ENCODE measurements at regions of chr1 and their contacts with region 1.

Region 1: DNA sequence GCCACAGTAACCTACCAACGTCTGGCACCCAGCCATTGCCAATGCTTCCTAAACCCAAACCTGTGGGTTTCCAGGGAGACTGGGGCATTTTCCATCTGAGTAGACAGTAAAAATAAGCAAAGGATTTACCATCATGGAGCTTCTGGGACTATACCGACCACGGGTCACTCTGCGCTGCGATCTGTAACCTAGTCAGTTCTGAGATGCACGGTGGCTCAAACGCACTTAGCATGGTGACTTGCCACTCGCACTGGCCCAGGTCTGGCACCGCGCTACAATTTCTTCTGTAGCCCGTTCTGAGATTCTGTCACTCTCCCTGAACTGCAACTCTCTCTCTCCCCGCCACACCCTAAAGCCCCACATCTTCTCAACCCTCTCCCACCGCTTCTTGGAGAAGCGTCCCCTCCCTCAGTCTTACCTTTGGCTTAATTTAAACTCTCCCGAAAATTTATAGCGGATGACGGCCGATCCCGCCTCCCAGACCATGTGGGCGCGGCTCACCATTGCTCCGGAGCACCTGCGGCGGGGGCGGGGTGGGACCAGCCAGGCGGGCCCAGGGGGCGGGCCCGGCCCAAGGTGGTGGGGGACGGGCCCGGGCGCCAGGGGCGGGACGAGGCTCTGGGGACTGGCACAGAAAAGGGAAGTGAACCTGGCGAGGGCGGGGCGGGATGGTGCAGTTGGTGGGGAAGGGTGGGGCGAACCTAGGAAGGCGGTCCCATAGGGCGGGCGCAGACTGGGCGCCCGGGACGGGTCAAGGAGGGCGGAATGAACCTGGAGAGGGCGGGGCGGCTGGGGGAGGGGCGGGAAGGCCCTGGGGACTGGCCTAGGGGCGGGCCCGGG is 493 bp upstream of the MAP3K21 start:
- DNase-seq: peak; percentile 70
- H3K4me3 Mint-ChIP-seq: peak overlapping the region; percentile 81
- H3K27ac Mint-ChIP-seq: peak overlapping the region; percentile 47
- H3K4me1 Mint-ChIP-seq: peaks cover 11% of the 10 kb centered on the region
- H3K27me3 Mint-ChIP-seq: peaks cover 35% of the 10 kb centered on the region

Region 2: GRCh38 chr1:233097959-233098580 is 229.0 kb before region 1 on chr1:
- intact Hi-C with region 1: no loop called
- DNase-seq: no peak
- H3K4me3 Mint-ChIP-seq: no peak overlapping the region
- H3K27ac Mint-ChIP-seq: no peak overlapping the region
- H3K4me1 Mint-ChIP-seq: peaks cover 10% of the 10 kb centered on the region
- H3K27me3 Mint-ChIP-seq: no peaks in the 10 kb centered on the region

Region 3: DNA sequence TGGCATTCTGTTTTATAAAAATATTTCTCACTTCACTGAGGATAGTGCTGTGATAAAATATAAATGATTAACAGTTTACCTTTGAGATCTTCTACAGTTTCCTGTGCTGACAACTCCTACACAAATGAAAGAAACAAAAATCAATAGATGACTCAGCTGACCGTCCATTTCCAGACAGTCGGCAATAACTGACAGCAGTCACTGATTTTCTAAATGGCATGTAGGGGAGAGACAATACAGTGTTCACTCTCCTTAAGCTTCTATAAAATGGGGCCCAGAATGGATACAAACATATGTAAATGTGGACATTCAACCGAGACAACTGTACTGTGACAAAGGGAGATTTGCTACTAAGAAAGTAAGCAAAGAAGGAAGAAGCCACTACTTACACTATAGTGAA is 65.8 kb before region 1 on chr1:
- intact Hi-C with region 1: loop called (anchors 2 kb)
- DNase-seq: no peak
- H3K4me3 Mint-ChIP-seq: peak overlapping the region; percentile 3
- H3K27ac Mint-ChIP-seq: peak overlapping the region; percentile 2
- H3K4me1 Mint-ChIP-seq: peaks cover 20% of the 10 kb centered on the region
- H3K27me3 Mint-ChIP-seq: no peaks in the 10 kb centered on the region

Region 4: DNA sequence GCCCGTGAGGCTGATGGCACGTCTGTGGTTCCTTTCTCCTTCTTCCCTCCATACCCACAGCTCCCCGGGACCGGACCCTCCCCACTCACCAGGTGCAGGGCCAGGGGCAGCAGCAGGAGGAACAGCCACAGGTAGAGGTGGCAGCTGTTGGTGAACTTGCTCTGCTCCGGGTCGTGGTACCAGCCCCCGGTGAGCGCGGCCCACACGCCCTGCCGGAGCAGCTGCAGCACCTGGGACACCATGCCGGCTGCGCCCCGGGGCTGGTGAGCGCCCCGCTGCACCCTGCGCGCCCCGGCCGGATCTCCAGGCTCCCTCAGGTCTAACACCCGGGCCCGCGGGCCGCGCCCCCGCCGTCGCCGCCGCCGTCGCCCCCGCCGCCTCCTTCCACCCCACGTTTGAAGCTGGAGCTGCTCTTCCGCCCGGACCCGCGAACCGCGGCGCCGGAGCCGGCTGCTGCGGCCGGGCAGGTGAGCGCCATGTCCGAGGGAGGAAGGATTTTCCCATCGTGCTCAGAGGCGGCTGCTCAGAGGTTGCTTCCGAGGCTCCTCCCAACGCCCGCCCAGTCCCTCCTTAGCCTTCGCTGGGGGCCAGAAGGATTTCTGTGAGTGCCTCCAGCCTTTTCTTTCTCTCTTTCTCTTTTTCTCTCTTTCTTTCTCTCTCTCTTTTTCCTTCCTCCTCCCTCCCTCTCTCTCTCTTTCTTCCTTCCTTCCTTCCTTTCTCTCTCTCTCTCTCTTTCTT is 31.6 kb before region 1 on chr1 and contains the start of gene PCNX2:
- intact Hi-C with region 1: loop called (anchors 2 kb)
- DNase-seq: peak; percentile 54
- H3K4me3 Mint-ChIP-seq: peak within 1 kb of the TSS; percentile 94
- H3K27ac Mint-ChIP-seq: peak within 1 kb of the TSS; percentile 86
- H3K4me1 Mint-ChIP-seq: peaks cover 37% of the 10 kb centered on the region
- H3K27me3 Mint-ChIP-seq: no peaks in the 10 kb centered on the region
- total RNA-seq, gene PCNX2: 33.1 and 33.7 TPM in 2 replicates

Region 5: GRCh38 chr1:233379869-233380438 is 52.9 kb after region 1 on chr1:
- intact Hi-C with region 1: no loop called
- DNase-seq: no peak
- H3K4me3 Mint-ChIP-seq: no peak overlapping the region
- H3K27ac Mint-ChIP-seq: no peak overlapping the region
- H3K4me1 Mint-ChIP-seq: no peaks in the 10 kb centered on the region
- H3K27me3 Mint-ChIP-seq: peaks cover 5% of the 10 kb centered on the region

Region 6: DNA sequence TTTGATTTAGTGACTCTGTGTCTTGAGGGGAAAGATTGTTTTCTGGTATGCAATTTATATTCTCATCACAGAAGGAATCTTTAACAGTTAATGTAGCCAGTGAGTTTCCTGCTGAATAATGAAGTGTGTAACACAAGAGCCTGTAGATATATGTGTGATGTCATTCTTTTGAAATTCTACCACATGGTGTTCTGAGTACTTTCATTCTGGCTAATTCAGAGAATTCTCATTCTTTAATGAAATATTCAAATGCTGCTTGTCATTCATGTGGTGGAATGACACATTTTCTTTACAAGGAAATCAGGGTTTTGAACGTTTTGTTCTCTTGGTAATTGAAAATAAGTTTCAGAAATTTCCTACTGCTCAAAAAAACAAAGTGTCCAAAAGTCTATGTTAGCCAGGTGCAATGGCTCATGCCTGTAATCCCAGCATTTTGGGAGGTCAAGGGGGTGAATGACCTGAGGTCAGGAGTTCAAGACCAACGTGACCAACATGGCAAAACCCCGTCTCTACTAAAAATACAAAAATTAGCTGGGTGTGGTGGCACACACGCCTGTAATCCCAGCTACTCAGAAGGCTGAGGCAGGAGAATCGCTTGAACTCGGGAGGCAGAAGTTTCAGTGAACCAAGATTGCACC is 80.1 kb after region 1 on chr1:
- intact Hi-C with region 1: loop called (anchors 2 kb)
- DNase-seq: no peak
- H3K4me3 Mint-ChIP-seq: no peak overlapping the region
- H3K27ac Mint-ChIP-seq: peak overlapping the region; percentile 64
- H3K4me1 Mint-ChIP-seq: peaks cover 22% of the 10 kb centered on the region
- H3K27me3 Mint-ChIP-seq: peaks cover 9% of the 10 kb centered on the region

Measured in activated T-helper 1 cell treated with anti-CD3 and anti-CD28 coated beads, Interleukin-12 subunit alpha, Interleukin-12 subunit beta, Interleukin-2, Interleukin-4 antibody, amounts not matched to agents 30 ng/mL and 10 ng/mL and 1 ng/mL, durations not matched to agents 14 hours and 24 hours and 36 hours (primary cell).